ENCODE measurements at regions of chr14 and their contacts with region 1.

Region 1: GRCh38 chr14:102774391-102775153 is 2.7 kb upstream of the TRAF3 start:
- DNase-seq: peak in 2 of 5 donors; percentile 35 to 40
- ATAC-seq: peak in 3 of 4 donors; percentile 56 to 76 (median 62)
- H3K4me3 ChIP-seq: no peak overlapping the region
- H3K27ac ChIP-seq: no peak overlapping the region
- H3K4me1 ChIP-seq: peaks cover 0 to 31% (median 8%) of the 10 kb centered on the region in 12 donors
- H3K27me3 ChIP-seq: peaks cover 0 to 7% (median 0%) of the 10 kb centered on the region in 9 donors
- CTCF ChIP-seq: peak; percentile 44 to 74 (median 60)
- POLR2A ChIP-seq: no peak

Region 2: DNA sequence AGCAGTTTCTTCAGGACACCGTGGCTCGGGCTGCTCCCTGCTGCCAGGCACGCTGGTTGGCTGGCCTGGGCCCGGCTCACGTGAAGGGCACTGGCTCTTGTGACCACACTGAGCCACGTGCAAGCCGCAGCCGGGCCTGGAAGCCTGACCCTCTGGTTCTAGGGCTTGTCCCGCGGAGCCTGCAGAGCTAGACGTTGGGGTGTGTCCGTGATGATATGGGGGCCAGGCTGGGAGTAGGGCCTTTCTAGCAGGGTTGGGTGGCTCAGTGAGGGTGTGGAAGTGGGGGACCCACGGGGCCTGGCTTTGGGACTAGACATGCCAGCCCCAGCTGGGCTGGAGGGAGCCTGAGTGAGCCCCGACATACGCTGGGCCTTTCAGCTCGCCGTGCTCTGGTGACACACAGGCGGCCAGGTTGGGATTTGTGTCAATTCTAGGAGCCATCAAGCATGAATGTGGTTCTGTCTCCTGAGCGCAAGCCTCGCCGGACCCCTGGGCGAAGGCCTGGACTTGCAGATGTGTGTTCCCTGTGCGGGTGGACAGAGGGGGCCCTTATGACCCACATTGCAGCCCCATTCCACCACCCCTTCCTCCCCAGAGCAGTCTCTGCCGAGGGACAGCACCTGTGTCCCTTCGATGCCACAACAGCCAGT is 134.4 kb after region 1 on chr14:
- intact Hi-C with region 1: loop called in 1 of 10 experiments (anchors 5 kb)
- DNase-seq: no peak
- ATAC-seq: no peak
- H3K4me3 ChIP-seq: no peak overlapping the region
- H3K27ac ChIP-seq: no peak overlapping the region
- H3K4me1 ChIP-seq: no peaks in the 10 kb centered on the region
- H3K27me3 ChIP-seq: no peaks in the 10 kb centered on the region
- CTCF ChIP-seq: no peak
- POLR2A ChIP-seq: no peak

Region 3: GRCh38 chr14:102928412-102929240 is 154.1 kb after region 1 on chr14:
- intact Hi-C with region 1: loop called in 1 of 10 experiments (anchors 10 kb)
- DNase-seq: peak in 4 of 5 donors; percentile 43 to 80 (median 54)
- ATAC-seq: peak in 3 of 4 donors; percentile 20 to 61 (median 41)
- H3K4me3 ChIP-seq: peak overlapping the region; percentile 0 to 55 (median 46)
- H3K27ac ChIP-seq: no peak overlapping the region
- H3K4me1 ChIP-seq: peaks cover 13 to 35% (median 26%) of the 10 kb centered on the region in 12 donors
- H3K27me3 ChIP-seq: peaks cover 27 to 79% (median 50%) of the 10 kb centered on the region in 9 donors
- CTCF ChIP-seq: no peak
- POLR2A ChIP-seq: no peak

Region 4: DNA sequence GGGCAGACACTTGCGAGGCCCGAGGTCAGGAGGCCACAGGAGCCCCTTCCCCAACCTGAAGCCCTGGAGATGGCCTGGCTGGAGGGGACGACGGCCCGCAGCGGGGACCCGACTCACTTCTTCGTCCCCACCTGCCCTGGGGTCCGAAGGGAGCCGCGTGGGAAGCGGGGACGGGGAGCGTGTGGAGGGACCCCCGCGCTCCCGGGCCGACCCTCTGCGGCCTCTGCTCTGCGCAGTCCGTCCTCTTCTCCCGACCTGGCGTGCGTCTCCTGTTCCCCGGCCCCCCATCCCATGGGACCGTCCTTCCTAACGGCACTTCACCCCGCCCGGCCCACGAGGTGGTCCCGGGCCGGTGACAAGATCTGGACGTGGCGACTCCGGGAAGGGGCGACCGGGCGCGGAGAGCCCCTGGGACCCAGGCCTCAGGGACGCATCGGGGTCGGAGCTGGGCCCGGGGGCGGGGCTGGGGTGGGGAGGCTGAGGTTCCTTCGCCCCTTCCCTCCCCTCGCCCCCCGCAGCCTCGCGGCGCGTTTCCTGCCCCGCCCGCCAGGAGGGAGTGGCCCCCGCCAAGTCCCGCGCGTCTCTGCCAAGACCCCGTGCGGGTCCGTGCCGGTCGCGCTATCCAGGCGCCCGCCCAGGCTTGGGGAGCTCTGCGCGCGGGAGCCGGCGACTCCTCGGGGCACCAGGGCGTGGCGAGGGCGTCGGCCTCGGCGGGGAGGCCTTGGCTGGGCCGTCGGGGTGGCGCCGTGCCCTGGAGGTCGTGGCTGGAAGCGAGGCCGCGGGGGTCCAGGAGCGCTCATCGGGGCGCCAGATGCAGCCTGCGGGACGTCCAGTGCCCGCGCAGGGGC is 445.8 kb after region 1 on chr14:
- intact Hi-C with region 1: no loop called
- DNase-seq: no peak
- ATAC-seq: peak in 2 of 4 donors; percentile 12 to 46
- H3K4me3 ChIP-seq: peak overlapping the region; percentile 22 to 52 (median 37)
- H3K27ac ChIP-seq: no peak overlapping the region
- H3K4me1 ChIP-seq: peaks cover 0 to 13% (median 5%) of the 10 kb centered on the region in 12 donors
- H3K27me3 ChIP-seq: peaks cover 5 to 60% (median 21%) of the 10 kb centered on the region in 9 donors
- CTCF ChIP-seq: no peak
- POLR2A ChIP-seq: no peak

Measured in heart left ventricle (tissue), 16 donors.